ENCODE measurements at regions of chr5 and their contacts with region 1.

Region 1: GRCh38 chr5:17132444-17133083 is 84.9 kb upstream of the BASP1 start:
- DNase-seq: no peak
- H3K4me3 ChIP-seq: no peak overlapping the region
- H3K27ac ChIP-seq: no peak overlapping the region
- H3K27me3 ChIP-seq: no peaks in the 10 kb centered on the region
- CTCF ChIP-seq: peak; percentile 68

Region 2: DNA sequence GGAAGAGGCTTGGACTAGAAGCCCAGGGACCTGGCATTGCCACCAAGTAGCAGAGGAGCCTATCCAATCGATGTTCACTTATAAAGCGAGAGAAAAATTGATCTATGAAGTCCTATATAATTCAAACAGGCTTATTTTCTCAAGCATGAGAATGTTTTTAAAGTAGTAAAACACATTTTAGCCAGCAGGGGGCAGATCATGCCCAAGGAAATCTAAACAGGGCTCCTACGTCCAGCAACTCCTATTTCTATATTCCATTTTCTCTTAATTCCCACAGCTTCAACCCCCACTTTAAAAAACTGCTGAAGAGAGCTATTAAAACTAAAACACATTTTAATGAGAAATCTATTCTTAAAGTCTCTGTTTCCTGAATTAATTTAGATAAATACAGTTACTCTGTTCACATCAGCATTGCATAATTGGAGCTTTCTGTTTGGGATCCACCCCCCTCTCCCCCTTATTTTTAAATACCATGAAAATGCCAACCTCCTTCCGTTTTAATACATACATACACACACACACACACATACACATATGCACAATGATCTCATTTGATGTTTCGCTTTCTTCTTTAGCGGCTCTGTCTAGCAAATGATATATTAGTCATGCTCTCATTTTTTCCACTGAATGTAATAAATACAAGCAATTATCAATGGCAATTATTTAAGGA is 341.4 kb before region 1 on chr5:
- CTCF ChIA-PET with region 1: interaction called, 13 read pairs
- POLR2A ChIA-PET with region 1: no interaction called
- DNase-seq: no peak
- H3K4me3 ChIP-seq: no peak overlapping the region
- H3K27ac ChIP-seq: no peak overlapping the region
- H3K27me3 ChIP-seq: no peaks in the 10 kb centered on the region
- CTCF ChIP-seq: peak; percentile 62

Region 3: DNA sequence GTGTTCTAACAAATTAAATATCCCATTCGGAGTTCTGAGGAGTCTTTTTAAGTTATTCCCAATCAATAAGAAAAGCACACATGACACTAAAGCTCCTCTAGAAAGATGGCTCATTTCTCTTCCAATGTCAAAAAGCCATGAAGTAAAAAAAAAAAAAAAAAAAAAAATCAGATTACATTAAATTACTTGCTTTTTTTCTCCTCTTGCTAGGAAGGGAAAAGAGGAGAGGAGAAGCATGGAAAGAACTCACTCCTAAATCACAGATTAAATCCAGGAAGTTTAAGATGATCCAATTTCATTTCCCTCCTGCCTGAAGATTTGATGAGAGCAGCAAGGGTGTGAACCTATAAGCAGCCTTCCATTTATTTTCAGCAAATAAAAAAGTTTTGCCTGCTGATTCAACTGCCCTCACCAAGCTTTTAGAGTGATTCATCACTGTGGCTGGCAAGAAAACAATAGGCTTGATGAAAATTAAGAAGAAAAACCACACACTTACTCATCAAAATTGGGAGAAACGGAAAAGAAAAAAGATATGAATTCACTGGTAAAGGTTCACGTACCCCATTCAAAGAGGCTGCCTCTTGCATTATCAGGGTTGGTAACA is 216.2 kb before region 1 on chr5:
- CTCF ChIA-PET with region 1: interaction called, 12 read pairs
- POLR2A ChIA-PET with region 1: interaction called, 6 read pairs
- DNase-seq: peak; percentile 55
- H3K4me3 ChIP-seq: no peak overlapping the region
- H3K27ac ChIP-seq: peak overlapping the region; percentile 39
- H3K27me3 ChIP-seq: no peaks in the 10 kb centered on the region
- CTCF ChIP-seq: no peak

Region 4: GRCh38 chr5:17113163-17113958 is 19.2 kb before region 1 on chr5:
- CTCF ChIA-PET with region 1: interaction called, 29 read pairs
- POLR2A ChIA-PET with region 1: interaction called, 3 read pairs
- DNase-seq: peak; percentile 15
- H3K4me3 ChIP-seq: no peak overlapping the region
- H3K27ac ChIP-seq: peak overlapping the region; percentile 48
- H3K27me3 ChIP-seq: no peaks in the 10 kb centered on the region
- CTCF ChIP-seq: no peak

Region 5: GRCh38 chr5:17143335-17143734 is 10.8 kb after region 1 on chr5:
- CTCF ChIA-PET with region 1: interaction called, 35 read pairs
- POLR2A ChIA-PET with region 1: interaction called, 3 read pairs
- DNase-seq: peak; percentile 44
- H3K4me3 ChIP-seq: no peak overlapping the region
- H3K27ac ChIP-seq: no peak overlapping the region
- H3K27me3 ChIP-seq: no peaks in the 10 kb centered on the region
- CTCF ChIP-seq: no peak

Region 6: GRCh38 chr5:17157916-17158529 is 25.5 kb after region 1 on chr5:
- CTCF ChIA-PET with region 1: interaction called, 77 read pairs
- POLR2A ChIA-PET with region 1: no interaction called
- DNase-seq: peak; percentile 96
- H3K4me3 ChIP-seq: no peak overlapping the region
- H3K27ac ChIP-seq: peak overlapping the region; percentile 95
- H3K27me3 ChIP-seq: no peaks in the 10 kb centered on the region
- CTCF ChIP-seq: no peak

Region 7: GRCh38 chr5:17305964-17306716 is 173.6 kb after region 1 on chr5:
- CTCF ChIA-PET with region 1: no interaction called
- POLR2A ChIA-PET with region 1: no interaction called
- DNase-seq: no peak
- H3K4me3 ChIP-seq: no peak overlapping the region
- H3K27ac ChIP-seq: peak overlapping the region; percentile 59
- H3K27me3 ChIP-seq: no peaks in the 10 kb centered on the region
- CTCF ChIP-seq: no peak

Region 8: GRCh38 chr5:17412760-17413671 is 280.5 kb after region 1 on chr5:
- CTCF ChIA-PET with region 1: no interaction called
- POLR2A ChIA-PET with region 1: no interaction called
- DNase-seq: no peak
- H3K4me3 ChIP-seq: no peak overlapping the region
- H3K27ac ChIP-seq: no peak overlapping the region
- H3K27me3 ChIP-seq: no peaks in the 10 kb centered on the region
- CTCF ChIP-seq: no peak

Measured in AG04450 (cell line).